ENCODE measurements at regions of chr2 and their contacts with region 1.

Region 1: DNA sequence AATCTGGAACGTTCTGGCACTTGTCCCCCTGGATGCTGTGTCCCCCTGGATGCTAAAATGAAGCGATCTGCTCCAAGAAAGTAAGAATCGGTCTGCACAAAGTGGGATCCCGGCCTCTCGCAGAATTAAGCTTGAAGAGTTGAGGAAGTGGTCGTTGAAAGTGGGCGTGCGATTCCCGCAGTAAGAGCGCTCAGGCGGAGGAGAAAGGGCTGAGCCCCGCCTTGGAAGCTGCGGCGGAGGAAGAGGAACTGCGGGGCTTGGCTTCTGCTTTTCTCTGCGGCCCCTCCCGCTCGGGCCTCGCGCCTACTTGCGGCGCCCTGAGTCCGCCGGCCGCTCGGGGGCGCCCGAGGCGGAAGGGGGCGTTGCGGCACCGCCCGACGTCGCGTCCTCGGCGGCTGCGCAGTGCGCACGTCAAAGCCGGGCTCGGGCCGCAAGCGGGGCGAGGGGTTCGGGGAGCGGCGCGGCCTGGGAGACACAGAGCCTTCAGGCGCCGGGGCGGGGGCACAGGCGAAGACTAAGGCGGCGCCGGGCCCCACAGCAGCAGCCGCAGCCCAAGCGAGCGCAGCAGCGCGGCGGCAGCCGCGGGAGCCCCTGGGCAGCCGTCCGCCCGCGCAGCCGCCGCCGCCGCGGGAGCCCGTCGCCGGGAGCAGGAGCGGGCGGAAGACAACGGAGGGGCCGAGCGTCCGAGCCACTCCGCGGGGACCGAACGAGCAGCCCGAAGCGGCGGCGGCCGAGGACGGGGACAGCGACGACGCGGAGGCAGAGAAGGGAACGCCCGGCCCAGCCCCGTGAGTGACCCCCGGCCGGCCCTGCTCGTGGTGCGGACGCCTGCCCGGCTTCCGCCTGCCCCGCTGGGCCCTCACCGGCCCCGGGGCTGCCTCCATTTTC is at the start of gene CAB39:
- DNase-seq: peak; percentile 63
- ATAC-seq: peak; percentile 87
- H3K4me3 ChIP-seq: peak within 1 kb of the TSS; percentile 100
- H3K27ac ChIP-seq: peak within 1 kb of the TSS; percentile 85
- H3K4me1 ChIP-seq: peaks cover 6% of the 10 kb centered on the region
- H3K27me3 ChIP-seq: no peaks in the 10 kb centered on the region
- CTCF ChIP-seq: peak; percentile 74 to 94 (median 76); a peak in 4 of 6 replicates
- EP300 ChIP-seq: peak; percentile 27 to 29; a peak in 1 of 4 replicates
- POLR2A ChIP-seq: peak; percentile 80
- RAD21 ChIP-seq: peak; percentile 56
- polyA plus RNA-seq, gene CAB39: 37.2 to 42.8 TPM

Region 2: GRCh38 chr2:230219419-230220331 is 493.0 kb before region 1 on chr2 and contains the start of gene SP110:
- CTCF ChIA-PET with region 1: no interaction called
- POLR2A ChIA-PET with region 1: no interaction called
- RAD21 ChIA-PET with region 1: no interaction called
- SMC1A ChIA-PET with region 1: no interaction called
- in situ Hi-C with region 1: no loop called
- intact Hi-C with region 1: loop called (anchors 10 kb)
- DNase-seq: peak; percentile 78
- ATAC-seq: peak; percentile 81
- H3K4me3 ChIP-seq: peak within 1 kb of the TSS; percentile 82
- H3K27ac ChIP-seq: peak within 1 kb of the TSS; percentile 95
- H3K4me1 ChIP-seq: peaks cover 37% of the 10 kb centered on the region
- H3K27me3 ChIP-seq: no peaks in the 10 kb centered on the region
- CTCF ChIP-seq: no peak
- EP300 ChIP-seq: no peak
- POLR2A ChIP-seq: peak; percentile 91
- RAD21 ChIP-seq: no peak
- polyA plus RNA-seq, gene SP110: 97.3 to 103 TPM

Region 3: GRCh38 chr2:230636684-230637271 is 75.9 kb before region 1 on chr2:
- CTCF ChIA-PET with region 1: interaction called, 6 read pairs
- POLR2A ChIA-PET with region 1: interaction called, 7 read pairs
- RAD21 ChIA-PET with region 1: interaction called, 22 read pairs
- SMC1A ChIA-PET with region 1: interaction called, 8 read pairs
- in situ Hi-C with region 1: no loop called
- intact Hi-C with region 1: no loop called
- DNase-seq: no peak
- ATAC-seq: peak; percentile 70
- H3K4me3 ChIP-seq: no peak overlapping the region
- H3K27ac ChIP-seq: peak overlapping the region; percentile 54
- H3K4me1 ChIP-seq: peaks cover 14% of the 10 kb centered on the region
- H3K27me3 ChIP-seq: no peaks in the 10 kb centered on the region
- CTCF ChIP-seq: no peak
- EP300 ChIP-seq: peak in 1 of 2 experiments; percentile 73; a peak in 2 of 4 replicates
- POLR2A ChIP-seq: no peak
- RAD21 ChIP-seq: no peak

Region 4: GRCh38 chr2:230650585-230651137 is 62.0 kb before region 1 on chr2:
- CTCF ChIA-PET with region 1: interaction called, 4 read pairs
- POLR2A ChIA-PET with region 1: interaction called, 11 read pairs
- RAD21 ChIA-PET with region 1: interaction called, 54 read pairs
- SMC1A ChIA-PET with region 1: interaction called, 27 read pairs
- in situ Hi-C with region 1: no loop called
- intact Hi-C with region 1: no loop called
- DNase-seq: peak; percentile 93
- ATAC-seq: peak; percentile 97
- H3K4me3 ChIP-seq: peak overlapping the region; percentile 0; the same call in 1 of the 2 replicates
- H3K27ac ChIP-seq: peak overlapping the region; percentile 54
- H3K4me1 ChIP-seq: peaks cover 12% of the 10 kb centered on the region
- H3K27me3 ChIP-seq: no peaks in the 10 kb centered on the region
- CTCF ChIP-seq: no peak
- EP300 ChIP-seq: peak; percentile 33 to 68; a peak in 2 of 4 replicates
- POLR2A ChIP-seq: no peak
- RAD21 ChIP-seq: peak; percentile 22; the same call in 1 of the 2 replicates

Region 5: GRCh38 chr2:230668184-230668938 is 44.3 kb before region 1 on chr2:
- CTCF ChIA-PET with region 1: interaction called, 15 read pairs
- POLR2A ChIA-PET with region 1: interaction called, 54 read pairs
- RAD21 ChIA-PET with region 1: interaction called, 86 read pairs
- SMC1A ChIA-PET with region 1: interaction called, 54 read pairs
- in situ Hi-C with region 1: no loop called
- intact Hi-C with region 1: loop called (anchors 2 kb)
- DNase-seq: peak; percentile 88
- ATAC-seq: peak; percentile 70
- H3K4me3 ChIP-seq: no peak overlapping the region
- H3K27ac ChIP-seq: peak overlapping the region; percentile 92
- H3K4me1 ChIP-seq: peaks cover 73% of the 10 kb centered on the region
- H3K27me3 ChIP-seq: no peaks in the 10 kb centered on the region
- CTCF ChIP-seq: no peak
- EP300 ChIP-seq: peak; percentile 90 to 92
- POLR2A ChIP-seq: peak; percentile 41
- RAD21 ChIP-seq: peak; percentile 10; the same call in 1 of the 2 replicates

Region 6: GRCh38 chr2:230770804-230771203 is 58.1 kb after region 1 on chr2:
- CTCF ChIA-PET with region 1: no interaction called
- POLR2A ChIA-PET with region 1: interaction called, 5 read pairs
- RAD21 ChIA-PET with region 1: interaction called, 8 read pairs
- SMC1A ChIA-PET with region 1: interaction called, 10 read pairs
- in situ Hi-C with region 1: no loop called
- intact Hi-C with region 1: no loop called
- DNase-seq: no peak
- ATAC-seq: no peak
- H3K4me3 ChIP-seq: no peak overlapping the region
- H3K27ac ChIP-seq: no peak overlapping the region
- H3K4me1 ChIP-seq: no peaks in the 10 kb centered on the region
- H3K27me3 ChIP-seq: no peaks in the 10 kb centered on the region
- CTCF ChIP-seq: no peak
- EP300 ChIP-seq: no peak
- POLR2A ChIP-seq: no peak
- RAD21 ChIP-seq: no peak

Measured in GM12878 (cell line).